ENCODE measurements at regions of chr1 and their contacts with region 1.

Region 1: GRCh38 chr1:226407497-226408284 is at the start of gene PARP1:
- DNase-seq: peak in 1 of 2 experiments; percentile 90
- H3K4me3 ChIP-seq: peak within 1 kb of the TSS; percentile 57 to 99 (median 92)
- H3K27ac ChIP-seq: peak within 1 kb of the TSS; percentile 73
- H3K4me1 ChIP-seq: peaks cover 16 to 30% (median 21%) of the 10 kb centered on the region in 4 experiments
- H3K27me3 ChIP-seq: no peaks in the 10 kb centered on the region
- CTCF ChIP-seq: peak; percentile 54 to 77 (median 61)
- EP300 ChIP-seq: no peak; a peak in 1 of 3 replicates
- POLR2A ChIP-seq: peak in 1 of 2 experiments; percentile 70; a peak in 1 of 3 replicates
- RAD21 ChIP-seq: peak in 1 of 2 experiments; percentile 34; a peak in 1 of 4 replicates
- total RNA-seq, gene PARP1: 408 and 416 TPM in 2 replicates

Region 2: GRCh38 chr1:226186124-226187018 is 221.3 kb before region 1 on chr1 and contains the start of gene ACBD3:
- CTCF ChIA-PET with region 1: no interaction called
- POLR2A ChIA-PET with region 1: no interaction called
- DNase-seq: peak; percentile 64 to 90
- H3K4me3 ChIP-seq: peak within 1 kb of the TSS; percentile 65 to 90 (median 79)
- H3K27ac ChIP-seq: peak within 1 kb of the TSS; percentile 80; the same call in 1 of the 2 replicates
- H3K4me1 ChIP-seq: peaks cover 0 to 4% (median 3%) of the 10 kb centered on the region in 4 experiments; a peak in 3 of 7 replicates
- H3K27me3 ChIP-seq: no peaks in the 10 kb centered on the region
- CTCF ChIP-seq: no peak
- EP300 ChIP-seq: peak in 1 of 2 experiments; percentile 62; a peak in 1 of 3 replicates
- POLR2A ChIP-seq: peak; percentile 92 to 95
- RAD21 ChIP-seq: peak in 1 of 2 experiments; percentile 23; a peak in 1 of 4 replicates
- total RNA-seq, gene ACBD3: 28.2 and 29.4 TPM in 2 replicates

Region 3: DNA sequence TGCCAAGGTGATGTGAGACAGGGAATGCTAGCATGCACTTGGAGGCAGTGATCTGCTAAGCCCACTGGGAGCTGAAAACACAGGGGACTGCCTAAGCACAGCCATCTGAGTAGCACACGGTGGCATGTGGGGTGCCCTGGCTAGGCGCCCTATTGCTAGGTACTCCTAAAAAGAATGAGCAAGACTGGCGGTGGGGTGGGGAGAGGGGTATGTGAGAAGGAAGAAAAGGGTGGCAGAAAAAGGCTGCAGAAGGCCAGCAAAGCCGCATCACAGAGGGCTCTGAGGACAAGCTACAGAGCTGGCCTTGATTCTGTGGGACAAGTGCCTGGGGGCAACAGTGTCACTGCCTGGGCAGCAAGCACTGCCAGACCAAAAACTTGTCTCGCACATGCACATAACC is 23.6 kb before region 1 on chr1:
- CTCF ChIA-PET with region 1: interaction called, 11 read pairs
- POLR2A ChIA-PET with region 1: interaction called, 10 read pairs
- DNase-seq: no peak
- H3K4me3 ChIP-seq: no peak overlapping the region
- H3K27ac ChIP-seq: no peak overlapping the region; the same call in 1 of the 2 replicates
- H3K4me1 ChIP-seq: no peaks in the 10 kb centered on the region
- H3K27me3 ChIP-seq: no peaks in the 10 kb centered on the region
- CTCF ChIP-seq: no peak
- EP300 ChIP-seq: no peak
- POLR2A ChIP-seq: no peak
- RAD21 ChIP-seq: no peak

Region 4: DNA sequence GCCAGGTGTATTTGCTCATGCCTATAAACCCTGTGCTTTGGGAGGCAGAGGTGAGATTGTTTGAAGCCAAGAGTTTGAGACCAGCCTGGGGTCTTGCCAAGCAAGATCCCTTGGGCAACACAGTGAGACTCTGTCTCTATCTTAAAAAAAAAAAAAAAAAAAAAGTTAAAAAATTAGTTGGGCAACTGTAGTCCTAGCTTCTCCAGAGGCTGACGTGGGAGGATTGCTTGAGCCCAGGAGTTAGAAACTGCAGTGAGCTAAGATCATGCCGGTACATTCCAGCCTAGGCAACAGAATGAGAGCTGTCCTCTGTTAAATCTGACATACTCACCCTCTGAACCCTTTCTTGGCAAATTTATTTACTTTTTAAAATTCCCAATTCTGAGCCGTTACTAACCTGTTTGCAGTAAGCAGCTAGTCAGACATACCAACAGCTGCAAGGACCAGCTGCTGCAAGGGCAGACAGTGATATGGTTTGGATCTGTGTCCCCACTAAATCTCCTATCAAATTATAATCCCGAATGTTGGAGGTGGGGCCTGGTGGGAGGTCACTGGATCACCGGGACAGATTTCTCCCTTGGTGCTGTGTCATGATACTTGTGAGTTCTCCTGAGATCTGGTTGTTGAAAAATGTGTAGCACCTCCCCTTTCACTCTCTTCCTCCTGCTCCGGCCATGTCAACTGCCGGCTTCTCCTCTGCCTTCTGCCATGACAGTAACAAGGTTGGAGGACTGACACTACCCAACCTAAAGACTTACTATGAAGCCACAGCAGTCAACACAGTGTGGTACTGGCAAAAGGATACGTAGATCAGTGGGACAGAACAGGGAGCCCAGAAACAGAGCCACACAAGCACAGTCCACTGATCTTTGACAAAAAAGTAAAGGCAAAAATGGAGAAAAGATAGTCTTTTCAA is 10.4 kb before region 1 on chr1:
- CTCF ChIA-PET with region 1: interaction called, 11 read pairs
- POLR2A ChIA-PET with region 1: interaction called, 11 read pairs
- DNase-seq: no peak
- H3K4me3 ChIP-seq: no peak overlapping the region
- H3K27ac ChIP-seq: no peak overlapping the region
- H3K4me1 ChIP-seq: no peaks in the 10 kb centered on the region; a peak in 2 of 7 replicates
- H3K27me3 ChIP-seq: no peaks in the 10 kb centered on the region
- CTCF ChIP-seq: no peak
- EP300 ChIP-seq: no peak
- POLR2A ChIP-seq: no peak
- RAD21 ChIP-seq: no peak

Region 5: DNA sequence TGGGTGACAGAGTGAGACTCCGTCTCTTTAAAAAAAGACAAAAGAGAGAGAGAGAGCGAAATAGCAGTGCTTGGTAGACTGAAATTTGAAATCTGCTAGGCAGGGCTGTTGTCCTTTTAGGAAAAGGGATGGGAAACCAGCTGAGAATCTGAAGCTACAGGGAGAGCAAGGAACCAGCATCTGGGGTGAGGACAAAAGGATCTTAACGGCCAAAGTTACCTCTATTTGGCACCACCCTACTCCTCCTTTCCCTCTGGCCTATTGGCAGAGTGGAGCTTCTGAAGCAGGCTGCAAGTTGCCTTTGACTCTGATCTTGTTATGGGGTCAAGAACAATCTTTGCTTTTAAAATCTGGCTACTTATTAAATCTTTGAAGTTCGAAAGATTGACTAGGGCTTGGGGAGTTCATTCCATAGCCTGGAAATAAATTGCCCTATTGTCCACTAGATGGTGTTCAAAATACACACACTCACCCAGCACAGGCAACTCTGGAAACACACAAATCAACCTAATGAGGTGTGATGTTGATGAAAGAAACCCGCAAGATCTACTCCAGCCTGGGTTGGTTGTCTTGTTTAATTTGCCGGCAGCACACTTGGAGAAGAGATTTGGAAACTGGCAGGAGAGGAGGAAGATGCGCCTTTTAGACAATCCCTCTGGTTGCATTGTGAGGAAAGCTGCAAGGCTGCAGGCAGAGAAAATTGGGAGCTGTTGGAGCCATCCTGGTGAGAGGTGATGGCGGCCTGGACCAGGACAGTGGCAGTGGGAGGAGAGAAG is 16.7 kb after region 1 on chr1:
- CTCF ChIA-PET with region 1: interaction called, 28 read pairs
- POLR2A ChIA-PET with region 1: interaction called, 10 read pairs
- DNase-seq: no peak
- H3K4me3 ChIP-seq: no peak overlapping the region
- H3K27ac ChIP-seq: no peak overlapping the region
- H3K4me1 ChIP-seq: peaks cover 0 to 9% (median 4%) of the 10 kb centered on the region in 4 experiments; a peak in 4 of 7 replicates
- H3K27me3 ChIP-seq: peaks cover 0 to 2% (median 0%) of the 10 kb centered on the region in 4 experiments; a peak in 1 of 7 replicates
- CTCF ChIP-seq: peak in 2 of 3 experiments; percentile 50 to 57; a peak in 3 of 4 replicates
- EP300 ChIP-seq: no peak
- POLR2A ChIP-seq: no peak
- RAD21 ChIP-seq: peak; percentile 67 to 71

Region 6: DNA sequence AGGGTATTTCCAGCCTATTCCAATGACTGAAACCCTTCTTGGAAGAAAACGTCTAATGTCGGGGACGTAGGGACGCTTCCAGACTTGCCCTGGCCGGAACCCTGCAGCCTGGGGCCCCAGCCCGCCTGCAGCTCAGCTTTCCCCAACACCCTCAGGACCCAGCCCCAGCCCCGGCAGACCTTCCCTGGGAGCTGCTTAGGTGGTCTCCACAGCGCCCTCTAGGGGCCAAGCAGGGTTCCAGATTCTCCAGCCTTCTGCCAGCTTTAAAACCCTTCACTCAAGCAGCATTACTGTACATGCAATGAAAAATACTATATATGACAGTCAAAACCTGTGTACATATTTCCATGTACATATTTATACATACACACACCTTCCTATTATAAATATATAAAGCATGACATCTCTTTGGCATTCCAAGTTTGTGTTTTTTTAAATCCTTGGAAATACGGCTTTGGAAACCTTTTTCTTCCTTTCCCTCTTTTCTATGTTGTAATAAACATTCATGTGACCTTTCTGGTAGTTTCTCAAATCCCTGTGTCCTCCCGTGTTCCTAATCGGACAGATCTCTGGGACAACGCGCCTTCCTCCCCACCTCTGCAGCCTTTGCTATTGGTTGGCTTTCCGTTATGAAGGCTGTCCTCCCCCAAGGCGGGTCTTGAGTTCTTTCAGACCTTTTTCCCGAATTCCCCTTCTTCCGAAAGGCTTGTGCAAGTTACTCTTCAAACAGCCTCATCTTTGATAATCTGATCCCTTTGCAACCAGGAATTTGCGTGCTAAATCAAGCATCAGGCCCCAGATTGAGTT is 201.2 kb after region 1 on chr1:
- CTCF ChIA-PET with region 1: interaction called, 12 read pairs
- POLR2A ChIA-PET with region 1: interaction called, 3 read pairs
- DNase-seq: peak; percentile 70 to 88
- H3K4me3 ChIP-seq: no peak overlapping the region
- H3K27ac ChIP-seq: no peak overlapping the region
- H3K4me1 ChIP-seq: peaks cover 0 to 27% (median 16%) of the 10 kb centered on the region in 4 experiments; a peak in 6 of 7 replicates
- H3K27me3 ChIP-seq: no peaks in the 10 kb centered on the region
- CTCF ChIP-seq: peak; percentile 76 to 88 (median 84)
- EP300 ChIP-seq: no peak
- POLR2A ChIP-seq: no peak
- RAD21 ChIP-seq: peak; percentile 65 to 75

Measured in H1 (cell line).